Psoas muscle (tissue), 8 donors: ENCODE measurements at regions of chr16 and their contacts with region 1.

Region 1: GRCh38 chr16:87278191-87279095 is 38.7 kb downstream of the C16orf95 start:
- DNase-seq: peak; percentile 70 to 83
- ATAC-seq: peak; percentile 77 to 89 (median 84)
- H3K4me3 ChIP-seq: no peak overlapping the region
- H3K27ac ChIP-seq: no peak overlapping the region
- H3K4me1 ChIP-seq: no peaks in the 10 kb centered on the region
- H3K27me3 ChIP-seq: no peaks in the 10 kb centered on the region
- CTCF ChIP-seq: peak; percentile 79

Region 2: DNA sequence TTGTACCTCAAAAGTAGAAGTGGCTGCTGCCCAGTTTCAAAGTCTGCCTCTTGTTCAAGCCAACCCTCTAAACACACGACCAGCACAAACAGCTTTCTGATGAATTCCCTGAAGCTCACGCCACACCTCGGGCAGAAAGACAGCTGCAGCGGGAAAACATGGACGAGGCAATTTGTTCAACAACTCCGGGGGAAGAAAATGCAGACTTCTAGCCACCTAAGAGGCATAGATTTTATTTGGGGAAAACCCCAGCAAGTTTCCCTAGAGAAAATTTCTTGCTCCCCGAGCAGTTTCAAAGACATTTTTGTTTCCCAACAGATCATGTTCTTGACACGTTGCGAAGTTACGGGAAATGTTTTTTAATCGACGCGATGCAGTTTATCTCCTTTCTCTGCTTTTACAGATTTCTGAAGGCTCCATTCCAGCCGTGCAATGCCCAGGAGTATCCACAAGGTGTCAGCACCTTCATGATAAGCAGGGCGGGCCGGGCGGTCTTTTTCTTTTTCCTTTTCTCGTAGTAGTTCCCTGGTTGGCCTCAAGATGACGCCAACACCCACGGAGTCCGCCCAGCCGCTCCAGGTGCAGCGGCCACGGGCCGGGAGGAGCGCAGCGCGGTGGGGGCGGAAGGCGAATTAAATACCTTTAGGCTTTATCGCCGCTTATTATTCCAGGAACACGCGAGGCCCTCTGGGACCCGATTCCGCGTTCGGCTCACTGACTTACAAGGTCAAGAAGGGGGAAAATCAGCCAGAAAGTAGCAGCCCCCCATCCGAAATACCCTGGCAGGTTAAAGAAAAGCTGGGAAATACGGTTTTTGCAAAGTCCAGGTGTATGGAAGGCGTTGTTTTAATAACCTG is 714.7 kb before region 1 on chr16:
- intact Hi-C with region 1: loop called (anchors 2 to 5 kb)
- DNase-seq: peak; percentile 82 to 88
- ATAC-seq: peak; percentile 94 to 99 (median 96)
- H3K4me3 ChIP-seq: peak overlapping the region; percentile 20
- H3K27ac ChIP-seq: no peak overlapping the region
- H3K4me1 ChIP-seq: peaks cover 5% of the 10 kb centered on the region
- H3K27me3 ChIP-seq: peaks cover 3 to 74% (median 32%) of the 10 kb centered on the region in 3 donors
- CTCF ChIP-seq: peak; percentile 100

Region 3: GRCh38 chr16:86854058-86854621 is 424.3 kb before region 1 on chr16:
- intact Hi-C with region 1: loop called in 1 of 2 experiments (anchors 10 kb)
- DNase-seq: no peak
- ATAC-seq: no peak
- H3K4me3 ChIP-seq: no peak overlapping the region
- H3K27ac ChIP-seq: no peak overlapping the region
- H3K4me1 ChIP-seq: no peaks in the 10 kb centered on the region
- H3K27me3 ChIP-seq: peaks cover 0 to 18% (median under 1%) of the 10 kb centered on the region in 3 donors
- CTCF ChIP-seq: no peak

Region 4: GRCh38 chr16:87062569-87063442 is 215.6 kb before region 1 on chr16:
- intact Hi-C with region 1: loop called in 1 of 2 experiments (anchors 10 kb)
- DNase-seq: peak in 1 of 2 donors; percentile 62
- ATAC-seq: peak; percentile 66 to 93 (median 80)
- H3K4me3 ChIP-seq: no peak overlapping the region
- H3K27ac ChIP-seq: no peak overlapping the region
- H3K4me1 ChIP-seq: no peaks in the 10 kb centered on the region
- H3K27me3 ChIP-seq: peaks cover 0 to 60% (median 3%) of the 10 kb centered on the region in 3 donors
- CTCF ChIP-seq: peak; percentile 68

Region 5: GRCh38 chr16:87203060-87203656 is 75.3 kb before region 1 on chr16:
- intact Hi-C with region 1: loop called in 1 of 2 experiments (anchors 2 kb)
- DNase-seq: peak; percentile 49 to 60
- ATAC-seq: peak in 3 of 4 donors; percentile 67 to 74 (median 72)
- H3K4me3 ChIP-seq: no peak overlapping the region
- H3K27ac ChIP-seq: no peak overlapping the region
- H3K4me1 ChIP-seq: no peaks in the 10 kb centered on the region
- H3K27me3 ChIP-seq: no peaks in the 10 kb centered on the region
- CTCF ChIP-seq: peak; percentile 59